Gastrocnemius medialis (tissue), 4 donors: ENCODE measurements at regions of chr11 and their contacts with region 1.

Region 1: DNA sequence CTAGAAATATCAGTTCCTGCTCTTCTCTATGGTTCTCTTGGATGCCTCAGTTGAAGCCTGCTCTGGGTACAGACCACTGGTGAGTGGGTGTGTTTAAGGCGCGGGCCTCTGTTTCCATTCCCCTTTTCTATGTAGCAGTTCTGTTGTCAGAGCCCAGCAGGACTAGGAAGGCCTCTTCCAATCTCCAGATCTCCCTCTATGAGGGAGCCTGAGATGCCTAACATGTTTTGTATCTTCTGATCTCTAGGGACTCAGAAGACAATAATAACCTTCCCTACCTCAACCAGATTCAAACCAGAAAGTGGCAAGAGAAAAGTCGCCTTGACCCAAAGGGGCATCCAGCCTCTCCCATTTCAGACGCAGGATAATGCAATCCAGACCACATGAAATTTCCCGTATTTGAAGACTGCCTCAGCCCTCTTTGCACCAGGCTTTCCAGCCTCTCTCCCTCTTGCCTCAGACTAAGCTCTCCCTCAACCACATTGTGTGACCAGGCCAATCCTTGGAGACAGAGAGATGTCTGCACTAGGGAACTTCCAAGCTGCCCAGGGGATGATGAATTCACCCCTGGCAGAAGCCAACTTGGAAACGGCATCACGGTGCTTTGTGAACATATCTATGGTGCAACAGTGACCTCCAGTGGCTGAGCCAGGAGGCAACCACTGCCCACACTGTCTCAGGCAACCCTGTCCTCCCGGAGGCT is 150.1 kb upstream of the UBASH3B start:
- DNase-seq: peak; percentile 65 to 78
- ATAC-seq: peak; percentile 97 to 99
- H3K4me3 ChIP-seq: no peak overlapping the region
- H3K27ac ChIP-seq: no peak overlapping the region
- H3K4me1 ChIP-seq: peaks cover 0 to 8% of the 10 kb centered on the region in 2 donors
- H3K27me3 ChIP-seq: no peaks in the 10 kb centered on the region
- CTCF ChIP-seq: peak; percentile 80 to 88 (median 85)
- POLR2A ChIP-seq: no peak

Region 2: DNA sequence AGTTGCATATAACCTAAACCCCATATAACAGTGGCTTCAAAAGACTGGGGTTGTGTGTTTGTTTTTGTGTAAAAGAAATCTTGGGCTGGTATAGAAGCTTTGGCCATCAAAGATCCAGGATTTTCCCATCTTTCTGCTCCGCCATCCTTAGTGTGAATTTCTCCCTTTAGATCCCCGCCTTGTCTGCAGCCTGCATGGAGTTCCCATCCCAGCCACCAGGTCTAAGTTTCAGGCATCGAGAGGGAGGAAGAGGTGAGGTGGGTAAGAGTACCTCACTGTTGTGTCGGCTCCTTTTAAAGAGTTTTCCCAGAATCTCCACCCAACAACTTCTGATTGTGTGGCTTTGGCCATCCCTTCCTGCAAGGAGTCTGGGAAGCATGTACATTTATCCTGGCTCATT is 857.1 kb before region 1 on chr11:
- in situ Hi-C with region 1: loop called in 3 of 4 experiments (anchors 5 to 10 kb)
- intact Hi-C with region 1: no loop called
- DNase-seq: no peak
- ATAC-seq: no peak
- H3K4me3 ChIP-seq: no peak overlapping the region
- H3K27ac ChIP-seq: no peak overlapping the region
- H3K4me1 ChIP-seq: no peaks in the 10 kb centered on the region
- H3K27me3 ChIP-seq: no peaks in the 10 kb centered on the region
- CTCF ChIP-seq: no peak
- POLR2A ChIP-seq: no peak

Region 3: GRCh38 chr11:122020902-122021301 is 484.6 kb before region 1 on chr11:
- in situ Hi-C with region 1: loop called in 2 of 4 experiments (anchors 10 to 25 kb)
- intact Hi-C with region 1: no loop called
- DNase-seq: no peak
- ATAC-seq: no peak
- H3K4me3 ChIP-seq: no peak overlapping the region
- H3K27ac ChIP-seq: no peak overlapping the region
- H3K4me1 ChIP-seq: no peaks in the 10 kb centered on the region
- H3K27me3 ChIP-seq: no peaks in the 10 kb centered on the region
- CTCF ChIP-seq: peak in 3 of 5 experiments; percentile 10 to 46 (median 26)
- POLR2A ChIP-seq: no peak

Region 4: GRCh38 chr11:122215244-122215992 is 290.0 kb before region 1 on chr11:
- in situ Hi-C with region 1: loop called (anchors 5 kb)
- intact Hi-C with region 1: loop called (anchors 1 kb)
- DNase-seq: peak; percentile 57 to 76
- ATAC-seq: peak; percentile 88 to 94
- H3K4me3 ChIP-seq: no peak overlapping the region
- H3K27ac ChIP-seq: peak overlapping the region; percentile 48 to 65 (median 60)
- H3K4me1 ChIP-seq: peaks cover 8 to 25% of the 10 kb centered on the region in 2 donors
- H3K27me3 ChIP-seq: no peaks in the 10 kb centered on the region
- CTCF ChIP-seq: peak; percentile 91 to 97 (median 93)
- POLR2A ChIP-seq: no peak